Breast epithelium (tissue), 4 donors: ENCODE measurements at regions of chr2 and their contacts with region 1.

Region 1: DNA sequence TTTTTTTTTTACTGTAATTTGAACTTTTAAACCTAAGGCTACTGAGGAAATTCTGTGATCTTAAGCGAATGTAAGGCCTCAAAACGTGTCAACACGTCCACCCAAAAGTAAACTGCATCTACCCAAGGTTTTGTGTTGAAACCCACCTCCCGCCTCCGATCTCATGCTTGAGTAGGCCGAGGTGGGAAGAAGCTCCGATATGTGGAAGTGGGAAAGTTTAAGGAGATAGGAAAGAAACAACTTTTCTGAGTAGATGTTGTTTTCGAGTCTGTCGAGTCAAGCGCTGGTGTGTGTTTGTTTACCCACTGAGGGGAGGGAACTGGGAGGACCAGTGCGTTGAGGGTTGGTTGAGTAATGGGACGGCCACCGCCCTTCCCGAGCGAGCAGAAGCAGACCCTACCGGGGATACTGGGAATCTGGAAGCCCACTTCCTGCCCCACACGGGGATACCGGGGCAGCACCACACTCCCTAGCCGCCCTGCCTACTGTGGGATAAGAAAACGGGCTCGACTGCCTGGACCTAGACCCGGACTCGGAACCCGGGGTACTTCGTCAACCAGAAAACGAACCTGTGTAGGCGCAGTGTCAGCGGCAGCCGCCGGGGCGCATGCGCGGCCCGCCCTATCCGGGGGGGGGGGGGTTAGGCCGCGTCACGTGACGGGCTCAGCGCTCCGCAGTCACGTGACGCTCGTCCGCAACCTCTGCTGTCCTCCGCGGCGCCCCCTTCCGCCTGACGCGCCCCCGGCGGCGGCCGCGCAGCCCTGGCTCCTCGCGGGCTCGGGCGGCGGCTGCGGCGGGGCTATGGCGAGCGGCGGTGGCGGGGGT is at the start of gene RETREG2:
- DNase-seq: peak; percentile 75 to 83
- H3K4me3 ChIP-seq: peak within 1 kb of the TSS; percentile 77 to 92 (median 90)
- H3K27ac ChIP-seq: peak within 1 kb of the TSS; percentile 97 to 99
- H3K4me1 ChIP-seq: peaks cover 0 to 19% of the 10 kb centered on the region in 2 donors
- H3K27me3 ChIP-seq: no peaks in the 10 kb centered on the region
- CTCF ChIP-seq: peak; percentile 17 to 42 (median 34)
- POLR2A ChIP-seq: peak; percentile 98
- total RNA-seq, gene RETREG2: 58.7 to 79.7 (median 66.3) TPM

Region 2: GRCh38 chr2:218777276-218777990 is 400.3 kb before region 1 on chr2:
- intact Hi-C with region 1: no loop called
- DNase-seq: no peak
- H3K4me3 ChIP-seq: no peak overlapping the region
- H3K27ac ChIP-seq: no peak overlapping the region
- H3K4me1 ChIP-seq: no peaks in the 10 kb centered on the region
- H3K27me3 ChIP-seq: no peaks in the 10 kb centered on the region
- CTCF ChIP-seq: no peak
- POLR2A ChIP-seq: no peak

Region 3: DNA sequence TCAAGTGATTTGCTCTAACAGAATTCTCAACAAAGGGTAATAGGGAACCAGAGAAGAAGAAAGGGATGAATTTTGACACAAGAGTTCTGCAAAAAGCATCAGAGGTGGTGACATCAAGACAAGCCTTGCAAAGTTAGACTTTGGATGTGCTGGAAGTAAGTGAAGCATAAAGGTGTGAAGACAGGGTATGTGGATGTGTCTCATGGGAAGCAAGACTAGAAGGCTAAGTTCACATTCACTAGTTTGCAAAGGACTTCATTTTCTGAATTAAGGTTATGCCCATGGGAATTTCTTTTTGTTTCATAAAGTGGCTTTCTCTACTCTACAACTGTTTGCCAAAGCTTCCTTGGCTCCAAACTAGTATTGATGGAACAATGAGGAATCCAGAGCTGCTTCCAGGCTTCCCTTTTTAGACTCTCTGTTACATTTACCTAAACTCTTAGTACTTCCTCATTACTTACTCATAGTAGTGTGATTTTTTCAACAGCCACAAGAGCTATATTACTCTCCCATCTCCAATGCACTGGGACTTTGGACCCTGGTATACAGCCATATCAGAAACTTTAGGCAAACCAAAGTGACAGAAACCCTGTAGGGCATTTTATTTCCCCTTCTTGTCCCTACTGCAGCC is 95.9 kb before region 1 on chr2:
- intact Hi-C with region 1: no loop called
- DNase-seq: no peak
- H3K4me3 ChIP-seq: no peak overlapping the region
- H3K27ac ChIP-seq: no peak overlapping the region
- H3K4me1 ChIP-seq: no peaks in the 10 kb centered on the region
- H3K27me3 ChIP-seq: no peaks in the 10 kb centered on the region
- CTCF ChIP-seq: no peak
- POLR2A ChIP-seq: no peak

Region 4: GRCh38 chr2:219689676-219690628 is 512.2 kb after region 1 on chr2:
- intact Hi-C with region 1: loop called (anchors 10 kb)
- DNase-seq: no peak
- H3K4me3 ChIP-seq: no peak overlapping the region
- H3K27ac ChIP-seq: peak overlapping the region in 1 of 2 donors; percentile 40
- H3K4me1 ChIP-seq: peaks cover 0 to 1% of the 10 kb centered on the region in 2 donors
- H3K27me3 ChIP-seq: no peaks in the 10 kb centered on the region
- CTCF ChIP-seq: peak; percentile 69 to 85 (median 79)
- POLR2A ChIP-seq: no peak